ENCODE measurements at regions of chr1 and their contacts with region 1.

Region 1: GRCh38 chr1:60765204-60765603 is 317.2 kb upstream of the NFIA start:
- DNase-seq: peak; percentile 65

Region 2: GRCh38 chr1:60281360-60281932 is 483.8 kb before region 1 on chr1:
- CTCF ChIA-PET with region 1: interaction called, 25 read pairs
- POLR2A ChIA-PET with region 1: interaction called, 4 read pairs
- DNase-seq: peak; percentile 87

Region 3: DNA sequence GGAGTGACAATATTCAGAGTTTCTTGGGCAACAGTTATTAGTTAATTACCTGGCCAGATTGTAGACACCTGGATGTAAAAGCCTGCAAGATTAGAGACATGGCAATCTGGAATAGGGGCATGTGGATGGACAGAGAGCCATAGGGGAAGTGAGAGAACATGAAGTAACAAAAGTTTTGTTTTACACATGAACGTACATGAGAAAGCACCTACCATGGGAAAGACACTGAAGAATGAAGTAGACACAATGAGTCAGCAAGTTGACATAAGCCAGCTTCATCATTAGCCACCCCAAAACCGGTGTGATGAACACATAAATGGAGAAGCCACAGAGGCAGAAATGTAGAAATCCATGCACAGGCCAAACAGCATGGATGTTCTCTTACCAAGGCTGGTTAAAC is 229.5 kb before region 1 on chr1:
- CTCF ChIA-PET with region 1: no interaction called
- POLR2A ChIA-PET with region 1: no interaction called
- DNase-seq: no peak

Measured in HEK293T (cell line).